ENCODE measurements at regions of chr19 and their contacts with region 1.

Region 1: GRCh38 chr19:39557441-39558151 is 17.6 kb upstream of the EID2 start:
- DNase-seq: no peak
- H3K4me3 ChIP-seq: peak overlapping the region; percentile 2 to 31; a peak in 2 of 4 replicates
- H3K27ac ChIP-seq: no peak overlapping the region
- H3K4me1 ChIP-seq: peaks cover 0 to 3% of the 10 kb centered on the region in 2 experiments; a peak in 1 of 4 replicates
- H3K27me3 ChIP-seq: peaks cover 5% of the 10 kb centered on the region; the same call in 1 of the 2 replicates
- CTCF ChIP-seq: no peak
- EP300 ChIP-seq: no peak
- RAD21 ChIP-seq: no peak

Region 2: DNA sequence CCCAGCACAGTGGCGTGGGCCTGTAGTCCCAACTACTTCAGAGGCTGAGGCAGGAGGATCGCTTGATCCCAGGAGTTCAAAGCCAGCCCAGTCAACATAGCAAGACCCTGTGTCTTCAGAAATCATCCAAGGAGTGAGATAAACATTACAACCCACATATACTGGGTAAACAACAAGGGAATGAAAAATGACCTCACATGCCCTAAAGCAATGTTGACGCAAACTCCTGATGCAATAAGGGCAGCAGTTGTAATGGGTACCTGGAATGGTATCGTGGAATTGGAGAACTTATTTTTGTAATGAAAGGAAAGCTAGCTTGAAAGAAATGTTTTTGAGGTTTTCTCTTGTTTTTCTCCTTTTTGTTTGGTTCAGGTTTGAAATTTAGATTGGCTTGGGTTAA is 73.6 kb after region 1 on chr19:
- CTCF ChIA-PET with region 1: no interaction called
- POLR2A ChIA-PET with region 1: no interaction called
- DNase-seq: no peak
- H3K4me3 ChIP-seq: no peak overlapping the region
- H3K27ac ChIP-seq: no peak overlapping the region
- H3K4me1 ChIP-seq: no peaks in the 10 kb centered on the region
- H3K27me3 ChIP-seq: no peaks in the 10 kb centered on the region
- CTCF ChIP-seq: no peak
- EP300 ChIP-seq: no peak
- RAD21 ChIP-seq: no peak

Region 3: GRCh38 chr19:39671738-39672363 is 114.3 kb after region 1 on chr19:
- CTCF ChIA-PET with region 1: interaction called, 16 read pairs
- POLR2A ChIA-PET with region 1: no interaction called
- DNase-seq: peak; percentile 34
- H3K4me3 ChIP-seq: no peak overlapping the region
- H3K27ac ChIP-seq: no peak overlapping the region
- H3K4me1 ChIP-seq: no peaks in the 10 kb centered on the region
- H3K27me3 ChIP-seq: peaks cover 7% of the 10 kb centered on the region; the same call in 1 of the 2 replicates
- CTCF ChIP-seq: peak; percentile 61
- EP300 ChIP-seq: no peak
- RAD21 ChIP-seq: peak; percentile 84

Measured in SK-N-SH (cell line).